B cell (primary cell): ENCODE measurements at regions of chr2 and their contacts with region 1.

Region 1: DNA sequence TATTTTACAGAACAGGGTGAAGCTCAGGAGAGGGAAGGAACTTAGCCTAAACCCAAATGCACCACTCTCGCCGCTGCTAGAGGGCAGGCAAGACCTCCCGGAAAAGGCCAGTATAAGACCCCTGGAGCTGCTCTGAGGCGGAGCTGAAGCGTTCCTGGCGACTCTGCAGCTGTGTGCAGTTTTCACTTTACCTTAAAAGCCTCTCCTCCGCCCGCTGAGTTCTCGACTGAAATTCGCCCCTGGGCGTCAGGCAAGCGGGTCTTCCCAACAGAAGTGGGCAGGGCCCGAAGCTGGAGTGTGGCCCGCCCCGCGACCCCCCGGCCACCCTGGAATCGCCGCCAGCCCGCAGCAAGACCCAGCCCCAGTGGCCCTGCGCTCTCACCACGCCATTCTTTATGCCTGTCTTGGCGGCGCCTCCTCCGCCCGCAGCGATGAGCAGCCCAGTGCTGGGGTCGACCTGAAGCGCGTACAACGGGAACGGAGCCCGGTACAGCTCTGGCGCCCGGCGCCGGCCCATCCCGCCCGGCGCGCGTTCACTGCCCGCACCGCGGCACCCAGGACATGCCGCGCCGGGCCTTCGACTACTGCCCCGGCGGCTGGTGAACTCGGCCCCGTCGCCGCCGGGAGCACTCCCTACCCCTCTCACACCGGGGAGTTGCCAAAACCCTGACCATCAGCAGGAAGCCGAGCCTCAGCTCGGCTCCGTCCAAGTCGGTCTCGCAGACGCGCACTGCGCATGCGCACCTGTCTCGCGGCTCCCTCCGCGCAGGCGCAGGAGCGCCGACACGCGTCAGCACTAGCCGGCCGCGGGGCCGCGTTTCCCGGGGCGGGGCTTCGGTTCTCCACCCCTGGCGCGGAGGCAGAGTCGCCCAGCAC is at the start of gene PREB:
- DNase-seq: peak; percentile 97
- ATAC-seq: peak; percentile 99
- H3K4me3 ChIP-seq: peak within 1 kb of the TSS; percentile 62 to 89 (median 78)
- H3K4me3 Mint-ChIP-seq: peak within 1 kb of the TSS; percentile 96
- H3K27ac ChIP-seq: peak within 1 kb of the TSS in 1 of 2 donors; percentile 86
- H3K27ac Mint-ChIP-seq: peak within 1 kb of the TSS; percentile 97
- H3K4me1 ChIP-seq: peaks cover 17 to 25% of the 10 kb centered on the region in 2 donors
- H3K4me1 Mint-ChIP-seq: peaks cover 24% of the 10 kb centered on the region
- H3K27me3 ChIP-seq: no peaks in the 10 kb centered on the region
- H3K27me3 Mint-ChIP-seq: no peaks in the 10 kb centered on the region
- CTCF ChIP-seq: no peak
- total RNA-seq, gene PREB: 44.6 and 46.0 TPM in 2 replicates

Region 2: GRCh38 chr2:26964446-26965130 is 169.6 kb before region 1 on chr2:
- CTCF ChIA-PET with region 1: interaction called, 12 read pairs
- POLR2A ChIA-PET with region 1: no interaction called
- intact Hi-C with region 1: no loop called
- DNase-seq: no peak
- ATAC-seq: no peak
- H3K4me3 ChIP-seq: no peak overlapping the region
- H3K4me3 Mint-ChIP-seq: no peak overlapping the region
- H3K27ac ChIP-seq: no peak overlapping the region
- H3K27ac Mint-ChIP-seq: no peak overlapping the region
- H3K4me1 ChIP-seq: no peaks in the 10 kb centered on the region
- H3K4me1 Mint-ChIP-seq: peaks cover 5% of the 10 kb centered on the region
- H3K27me3 ChIP-seq: peaks cover 2 to 14% (median 8%) of the 10 kb centered on the region in 4 experiments
- H3K27me3 Mint-ChIP-seq: peaks cover 39% of the 10 kb centered on the region
- CTCF ChIP-seq: no peak

Region 3: DNA sequence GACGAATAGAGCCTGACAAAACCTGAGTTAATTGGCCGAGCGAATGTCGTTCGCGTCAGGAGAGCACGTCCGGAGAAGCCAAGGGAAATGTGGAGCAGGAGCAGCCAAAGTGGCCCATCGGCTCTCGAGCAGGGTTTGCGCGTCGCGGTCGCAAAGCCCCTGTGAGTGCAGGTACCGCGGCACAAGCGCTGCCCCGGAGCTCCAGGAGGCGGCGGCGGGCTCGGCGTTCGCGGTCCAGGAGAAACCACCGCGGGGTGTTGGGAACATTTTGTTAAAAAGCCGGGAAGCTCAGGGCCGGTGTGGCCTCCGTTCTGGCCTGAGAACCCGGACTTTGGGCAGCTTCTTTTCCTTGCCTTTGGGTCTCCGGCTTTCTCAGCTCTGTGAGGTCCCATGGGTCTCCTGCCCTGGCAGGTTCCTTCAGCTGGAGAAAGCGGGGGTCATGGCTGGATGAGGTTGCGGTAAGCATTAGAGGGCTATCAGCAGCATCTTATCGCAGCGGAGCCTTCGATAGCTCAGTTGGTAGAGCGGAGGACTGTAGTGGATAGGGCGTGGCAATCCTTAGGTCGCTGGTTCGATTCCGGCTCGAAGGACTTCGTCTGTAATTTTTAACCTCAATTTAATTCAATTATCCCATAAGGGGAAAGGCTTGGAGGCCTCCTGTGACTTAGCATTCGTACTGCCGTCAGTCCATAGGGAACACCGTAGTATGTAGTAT is 83.7 kb before region 1 on chr2:
- CTCF ChIA-PET with region 1: interaction called, 4 read pairs
- POLR2A ChIA-PET with region 1: no interaction called
- intact Hi-C with region 1: loop called (anchors 1 kb)
- DNase-seq: peak; percentile 98
- ATAC-seq: peak; percentile 60
- H3K4me3 ChIP-seq: peak overlapping the region; percentile 57 to 94 (median 81)
- H3K4me3 Mint-ChIP-seq: peak overlapping the region; percentile 95
- H3K27ac ChIP-seq: peak overlapping the region; percentile 72 to 80
- H3K27ac Mint-ChIP-seq: peak overlapping the region; percentile 100
- H3K4me1 ChIP-seq: peaks cover 4 to 15% of the 10 kb centered on the region in 2 donors
- H3K4me1 Mint-ChIP-seq: peaks cover 17% of the 10 kb centered on the region
- H3K27me3 ChIP-seq: no peaks in the 10 kb centered on the region
- H3K27me3 Mint-ChIP-seq: peaks cover 7% of the 10 kb centered on the region
- CTCF ChIP-seq: peak; percentile 50

Region 4: DNA sequence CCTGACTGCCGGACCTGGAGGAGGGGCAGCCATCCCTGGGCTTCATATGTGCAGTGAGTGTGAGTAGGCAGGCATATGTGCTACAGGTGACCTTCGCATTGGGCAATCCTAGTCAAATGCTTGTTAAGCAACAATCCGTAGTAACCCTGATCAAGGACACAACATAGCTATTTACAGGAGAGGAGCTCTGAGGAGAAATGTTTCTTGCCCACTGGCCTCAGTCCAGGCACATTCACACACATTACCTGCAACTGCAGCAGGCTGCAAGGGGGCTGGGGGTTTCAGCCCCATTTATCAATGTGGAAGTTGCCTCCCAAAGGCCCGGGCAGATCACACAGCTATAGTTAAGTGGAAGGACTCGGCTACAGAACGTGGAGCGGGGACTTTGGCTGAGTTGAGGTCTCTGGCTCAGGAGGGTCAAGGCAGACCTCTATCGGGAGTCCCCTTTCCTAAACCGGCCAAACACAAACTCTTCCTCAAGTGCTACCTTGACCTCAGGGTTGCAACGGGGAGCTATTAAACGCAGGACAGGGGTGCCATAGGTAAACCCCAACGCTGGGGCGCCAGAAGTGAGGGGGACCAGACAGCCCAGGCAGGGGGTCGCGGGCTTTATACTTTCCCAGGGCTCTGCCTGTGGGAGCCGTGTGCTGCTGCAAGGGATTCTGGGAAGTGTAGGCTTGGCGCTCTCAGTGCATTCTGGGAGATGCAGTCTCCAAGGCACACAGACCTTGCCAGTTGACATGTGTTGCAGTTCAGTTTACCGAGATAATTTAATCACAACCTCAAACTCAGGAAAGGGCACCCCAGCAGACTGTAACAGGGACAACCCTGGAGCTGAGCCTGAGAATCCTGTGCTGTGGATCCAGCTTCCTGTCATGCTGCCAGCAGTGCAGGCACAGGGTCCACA is 38.1 kb before region 1 on chr2:
- CTCF ChIA-PET with region 1: interaction called, 4 read pairs
- POLR2A ChIA-PET with region 1: interaction called, 3 read pairs
- intact Hi-C with region 1: loop called (anchors 1 kb)
- DNase-seq: peak; percentile 67
- ATAC-seq: peak; percentile 90
- H3K4me3 ChIP-seq: peak overlapping the region in 3 of 5 experiments; percentile 38 to 55 (median 48)
- H3K4me3 Mint-ChIP-seq: peak overlapping the region; percentile 81
- H3K27ac ChIP-seq: no peak overlapping the region
- H3K27ac Mint-ChIP-seq: peak overlapping the region; percentile 41
- H3K4me1 ChIP-seq: peaks cover 6 to 9% of the 10 kb centered on the region in 2 donors
- H3K4me1 Mint-ChIP-seq: peaks cover 11% of the 10 kb centered on the region
- H3K27me3 ChIP-seq: no peaks in the 10 kb centered on the region
- H3K27me3 Mint-ChIP-seq: no peaks in the 10 kb centered on the region
- CTCF ChIP-seq: no peak

Region 5: DNA sequence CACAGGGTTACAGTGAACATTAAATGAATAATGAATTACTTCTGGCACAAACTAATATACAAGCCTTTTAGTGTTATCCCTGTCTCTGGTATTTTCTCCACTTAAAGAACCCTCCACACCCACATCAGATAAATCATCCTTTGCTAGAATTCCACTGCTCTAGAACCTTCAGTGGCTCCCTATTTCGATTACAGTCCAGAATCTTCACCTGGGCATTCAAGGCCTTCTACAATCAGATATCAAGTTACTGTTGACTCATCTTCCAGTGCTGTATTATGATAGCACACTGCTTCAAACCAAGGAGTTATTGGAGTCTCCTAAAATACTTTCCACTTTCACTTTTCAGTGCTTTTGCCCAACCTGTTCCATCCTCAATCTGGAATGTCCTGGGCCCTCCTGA is 18.7 kb before region 1 on chr2:
- CTCF ChIA-PET with region 1: no interaction called
- POLR2A ChIA-PET with region 1: no interaction called
- intact Hi-C with region 1: no loop called
- DNase-seq: no peak
- ATAC-seq: no peak
- H3K4me3 ChIP-seq: no peak overlapping the region
- H3K4me3 Mint-ChIP-seq: no peak overlapping the region
- H3K27ac ChIP-seq: no peak overlapping the region
- H3K27ac Mint-ChIP-seq: no peak overlapping the region
- H3K4me1 ChIP-seq: peaks cover 9 to 12% of the 10 kb centered on the region in 2 donors
- H3K4me1 Mint-ChIP-seq: peaks cover 8% of the 10 kb centered on the region
- H3K27me3 ChIP-seq: peaks cover 0 to 26% (median 12%) of the 10 kb centered on the region in 4 experiments
- H3K27me3 Mint-ChIP-seq: peaks cover 23% of the 10 kb centered on the region
- CTCF ChIP-seq: no peak

Region 6: GRCh38 chr2:27191053-27191829 is 57.1 kb after region 1 on chr2:
- CTCF ChIA-PET with region 1: interaction called, 12 read pairs
- POLR2A ChIA-PET with region 1: no interaction called
- intact Hi-C with region 1: no loop called
- DNase-seq: peak; percentile 74
- ATAC-seq: peak; percentile 73
- H3K4me3 ChIP-seq: no peak overlapping the region
- H3K4me3 Mint-ChIP-seq: no peak overlapping the region
- H3K27ac ChIP-seq: no peak overlapping the region
- H3K27ac Mint-ChIP-seq: no peak overlapping the region
- H3K4me1 ChIP-seq: no peaks in the 10 kb centered on the region
- H3K4me1 Mint-ChIP-seq: no peaks in the 10 kb centered on the region
- H3K27me3 ChIP-seq: no peaks in the 10 kb centered on the region
- H3K27me3 Mint-ChIP-seq: no peaks in the 10 kb centered on the region
- CTCF ChIP-seq: peak; percentile 74

Region 7: DNA sequence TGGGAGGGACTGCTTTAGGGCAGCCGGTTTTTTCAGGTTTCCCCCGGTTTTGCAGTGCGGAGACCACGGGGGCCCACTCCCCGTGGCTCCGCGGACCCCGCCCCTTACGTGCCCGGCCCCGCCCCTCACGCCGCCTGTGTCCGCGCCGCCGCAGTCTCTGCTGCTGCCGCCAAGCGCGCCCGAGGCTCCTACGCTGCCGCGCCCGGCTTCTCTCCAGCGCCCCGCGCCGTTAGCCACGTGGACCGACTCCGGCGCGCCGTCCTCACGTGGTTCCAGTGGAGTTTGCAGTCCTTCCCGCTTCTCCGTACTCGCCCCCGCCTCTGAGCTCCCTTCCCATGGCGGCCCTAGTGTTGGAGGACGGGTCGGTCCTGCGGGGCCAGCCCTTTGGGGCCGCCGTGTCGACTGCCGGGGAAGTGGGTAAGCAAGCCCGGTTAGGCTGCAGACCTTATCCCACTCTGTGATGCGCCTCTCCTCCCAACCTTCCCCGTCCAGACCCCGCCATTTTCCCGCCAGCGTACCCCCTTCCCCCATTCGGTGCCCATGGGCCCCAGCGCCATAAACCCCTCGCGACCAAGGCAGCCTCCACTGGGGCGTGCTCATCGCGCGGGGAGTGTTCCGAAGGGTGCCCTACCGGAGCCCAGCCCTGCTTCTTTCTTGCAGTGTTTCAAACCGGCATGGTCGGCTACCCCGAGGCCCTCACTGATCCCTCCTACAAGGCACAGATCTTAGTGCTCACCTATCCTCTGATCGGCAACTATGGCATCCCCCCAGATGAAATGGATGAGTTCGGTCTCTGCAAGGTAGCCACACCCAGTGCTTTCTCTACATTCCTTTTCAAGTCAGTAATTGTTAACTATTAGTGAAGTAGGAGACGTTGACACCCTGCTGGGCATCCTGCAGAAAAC is 83.3 kb after region 1 on chr2 and contains the start of gene CAD:
- CTCF ChIA-PET with region 1: no interaction called
- POLR2A ChIA-PET with region 1: interaction called, 7 read pairs
- intact Hi-C with region 1: loop called (anchors 1 kb)
- DNase-seq: peak; percentile 89
- ATAC-seq: peak; percentile 86
- H3K4me3 ChIP-seq: peak within 1 kb of the TSS; percentile 11 to 85 (median 79)
- H3K4me3 Mint-ChIP-seq: peak within 1 kb of the TSS; percentile 98
- H3K27ac ChIP-seq: peak within 1 kb of the TSS; percentile 70 to 74
- H3K27ac Mint-ChIP-seq: peak within 1 kb of the TSS; percentile 87
- H3K4me1 ChIP-seq: peaks cover 28 to 33% of the 10 kb centered on the region in 2 donors
- H3K4me1 Mint-ChIP-seq: peaks cover 44% of the 10 kb centered on the region
- H3K27me3 ChIP-seq: no peaks in the 10 kb centered on the region
- H3K27me3 Mint-ChIP-seq: no peaks in the 10 kb centered on the region
- CTCF ChIP-seq: no peak
- total RNA-seq, gene CAD: 35.6 and 36.0 TPM in 2 replicates